ENCODE measurements at regions of chr16 and their contacts with region 1.

Region 1: DNA sequence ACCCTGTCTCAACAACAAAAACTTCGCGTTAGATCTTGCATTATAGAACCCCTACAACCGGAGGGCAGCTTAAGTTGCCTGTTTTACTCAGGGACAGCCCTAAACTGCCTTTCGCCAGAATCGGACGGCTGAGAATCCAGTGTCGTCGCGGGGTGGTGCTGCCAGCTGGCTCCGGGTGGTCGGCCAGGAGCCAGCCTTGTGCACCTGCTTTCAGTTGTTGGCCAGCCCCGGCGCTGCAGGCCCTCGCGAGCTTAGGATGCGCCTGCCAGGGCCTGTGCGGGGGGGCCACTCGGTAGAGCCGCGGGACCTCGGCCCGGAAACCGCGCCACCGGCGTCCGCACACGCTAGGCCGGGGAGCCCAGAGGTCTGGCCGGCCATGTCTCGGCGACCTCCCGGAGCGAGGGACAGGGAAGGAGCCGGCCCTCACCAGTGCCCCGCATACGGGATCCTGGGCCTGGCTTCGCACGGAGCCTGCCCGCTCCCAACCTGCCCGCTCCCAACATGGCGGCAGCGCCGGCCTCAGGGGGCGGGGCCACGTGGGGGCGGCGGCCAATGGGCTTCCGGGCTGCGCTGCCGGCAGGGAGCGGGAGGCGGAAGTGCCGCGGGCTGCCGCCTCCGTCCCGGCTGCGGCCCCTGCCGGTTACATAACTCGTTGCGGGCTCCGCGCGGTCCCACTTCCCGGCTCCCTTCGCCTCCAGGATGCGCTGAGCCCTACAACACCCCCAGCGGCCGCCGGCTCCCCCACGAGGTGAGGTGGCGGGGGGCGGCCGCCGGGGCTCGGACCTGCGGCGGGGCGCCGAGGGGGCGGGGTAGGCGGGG is 14.2 kb downstream of the NAA60 start:
- DNase-seq: peak; percentile 89
- ATAC-seq: peak; percentile 89
- H3K4me3 Mint-ChIP-seq: peak overlapping the region; percentile 80
- H3K27ac Mint-ChIP-seq: peak overlapping the region; percentile 87
- H3K4me1 Mint-ChIP-seq: peaks cover 48% of the 10 kb centered on the region
- H3K27me3 Mint-ChIP-seq: no peaks in the 10 kb centered on the region

Region 2: GRCh38 chr16:3443108-3444031 is 14.3 kb before region 1 on chr16 and contains the starts of genes NAA60 and ZNF597:
- CTCF ChIA-PET with region 1: interaction called, 8 read pairs
- POLR2A ChIA-PET with region 1: interaction called, 16 read pairs
- DNase-seq: peak; percentile 87
- ATAC-seq: peak; percentile 94
- H3K4me3 Mint-ChIP-seq: peak within 1 kb of the TSS; percentile 95
- H3K27ac Mint-ChIP-seq: peak within 1 kb of the TSS; percentile 96
- H3K4me1 Mint-ChIP-seq: peaks cover 22% of the 10 kb centered on the region
- H3K27me3 Mint-ChIP-seq: no peaks in the 10 kb centered on the region
- total RNA-seq, gene NAA60: 46.3 to 49.0 TPM
- total RNA-seq, gene ZNF597: 2.4 to 2.7 TPM